ENCODE measurements at regions of chr15 and their contacts with region 1.

Region 1: GRCh38 chr15:40081691-40082194 is 26.9 kb downstream of the BMF start:
- DNase-seq: no peak

Region 2: DNA sequence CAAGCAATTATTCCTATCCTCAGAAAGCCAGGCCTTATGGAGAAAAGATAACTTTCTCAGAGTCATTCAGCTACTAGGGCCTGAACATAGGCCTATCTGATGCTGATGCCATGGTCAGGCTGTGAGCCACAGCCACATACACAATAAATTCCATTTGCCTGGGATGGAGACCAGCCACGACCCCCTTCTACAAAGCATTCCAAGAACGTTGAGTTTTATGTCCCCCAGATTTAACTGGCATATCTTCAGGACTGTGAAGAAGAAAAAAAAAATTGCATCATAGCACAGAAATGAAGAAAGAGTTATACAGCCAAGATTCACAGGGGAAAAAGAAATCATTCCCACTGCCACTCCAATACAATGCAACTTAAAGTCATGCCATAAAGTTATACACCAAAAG is 400.9 kb before region 1 on chr15:
- CTCF ChIA-PET with region 1: no interaction called
- POLR2A ChIA-PET with region 1: no interaction called
- DNase-seq: no peak

Region 3: GRCh38 chr15:39925112-39925842 is 156.5 kb before region 1 on chr15:
- CTCF ChIA-PET with region 1: no interaction called
- POLR2A ChIA-PET with region 1: no interaction called
- DNase-seq: no peak

Region 4: DNA sequence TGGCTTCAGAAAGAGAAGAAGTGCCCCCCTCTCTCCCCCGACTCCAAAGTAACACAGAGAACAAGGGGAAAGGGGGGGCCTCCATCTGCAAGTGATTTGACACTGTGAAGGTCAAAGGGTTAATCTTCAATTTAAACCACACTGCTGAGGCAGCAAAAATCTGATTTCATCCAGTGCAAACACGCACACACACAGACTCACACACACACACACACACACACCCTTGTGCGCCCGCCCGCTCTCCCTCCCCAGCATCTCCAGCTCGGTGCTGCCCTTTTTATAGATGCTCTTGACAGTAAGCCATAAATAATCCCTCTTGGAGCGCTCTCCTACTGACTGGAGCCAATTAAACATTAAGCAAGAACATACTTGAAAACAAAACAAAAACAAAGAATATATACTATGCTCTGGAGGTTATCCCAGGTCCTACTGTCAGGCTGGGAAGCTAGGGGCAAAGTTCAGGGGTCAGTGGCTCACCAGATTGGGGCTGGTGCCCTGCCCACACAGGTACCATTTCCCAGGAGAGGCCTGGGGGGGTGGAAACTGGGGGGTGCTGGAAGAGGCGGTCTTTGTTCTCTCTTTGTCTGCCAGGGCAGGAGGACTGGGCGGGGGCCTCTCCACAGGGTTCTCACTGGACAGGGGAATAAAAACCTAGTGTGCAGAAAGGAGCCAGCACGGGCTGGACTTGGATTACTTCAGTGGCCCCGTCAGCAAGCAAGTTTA is 10.7 kb after region 1 on chr15:
- CTCF ChIA-PET with region 1: no interaction called
- POLR2A ChIA-PET with region 1: interaction called, 14 read pairs
- DNase-seq: no peak

Region 5: GRCh38 chr15:40098489-40099261 is 16.9 kb after region 1 on chr15:
- CTCF ChIA-PET with region 1: interaction called, 4 read pairs
- POLR2A ChIA-PET with region 1: interaction called, 14 read pairs
- DNase-seq: peak; percentile 75

Measured in HEK293T (cell line).